PC-9 (cell line): ENCODE measurements at regions of chr11 and their contacts with region 1.

Region 1: DNA sequence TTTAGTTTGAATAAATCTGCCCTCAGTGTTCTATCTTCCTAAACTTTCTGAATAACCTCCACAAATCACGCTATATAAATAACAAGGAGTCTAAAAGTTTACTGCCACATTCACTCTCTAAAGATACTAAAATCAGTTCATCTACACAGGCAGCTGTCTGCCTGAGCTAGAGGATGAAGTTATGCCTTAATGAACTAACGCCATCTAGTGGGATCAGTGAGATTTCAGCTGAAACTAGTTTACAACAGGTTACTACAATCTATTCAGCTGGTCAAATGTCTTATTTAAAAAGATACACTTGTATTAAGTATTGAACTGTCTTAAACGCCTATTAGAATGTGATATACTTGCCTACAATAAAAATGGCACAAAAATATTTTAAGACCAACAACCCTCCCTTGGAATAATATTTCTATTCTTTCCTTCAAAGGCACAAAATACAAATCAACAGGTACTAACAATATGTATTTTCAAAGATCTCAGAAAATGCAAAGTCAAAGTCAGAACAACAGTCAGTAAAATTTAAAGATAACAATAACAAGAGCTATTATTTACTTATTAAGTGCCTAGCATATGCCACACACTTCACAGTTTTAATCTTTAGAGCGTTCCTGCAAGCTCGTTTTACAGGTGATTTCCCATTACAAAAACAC is 84.1 kb downstream of the LARGE2 start:
- DNase-seq: peak; percentile 10 to 67
- H3K4me3 ChIP-seq: no peak overlapping the region
- H3K27ac ChIP-seq: no peak overlapping the region
- H3K4me1 ChIP-seq: no peaks in the 10 kb centered on the region
- H3K27me3 ChIP-seq: no peaks in the 10 kb centered on the region
- CTCF ChIP-seq: peak; percentile 90

Region 2: GRCh38 chr11:45771566-45772448 is 234.7 kb before region 1 on chr11:
- CTCF ChIA-PET with region 1: interaction called, 3 read pairs
- POLR2A ChIA-PET with region 1: no interaction called
- intact Hi-C with region 1: loop called (anchors 1 kb)
- DNase-seq: peak; percentile 59 to 83
- H3K4me3 ChIP-seq: peak overlapping the region; percentile 57
- H3K27ac ChIP-seq: no peak overlapping the region
- H3K4me1 ChIP-seq: no peaks in the 10 kb centered on the region
- H3K27me3 ChIP-seq: peaks cover 78% of the 10 kb centered on the region
- CTCF ChIP-seq: peak; percentile 89

Region 3: GRCh38 chr11:45872513-45873356 is 133.8 kb before region 1 on chr11:
- CTCF ChIA-PET with region 1: interaction called, 18 read pairs
- POLR2A ChIA-PET with region 1: no interaction called
- intact Hi-C with region 1: loop called (anchors 1 kb)
- DNase-seq: peak; percentile 56 to 69
- H3K4me3 ChIP-seq: no peak overlapping the region
- H3K27ac ChIP-seq: no peak overlapping the region
- H3K4me1 ChIP-seq: no peaks in the 10 kb centered on the region
- H3K27me3 ChIP-seq: no peaks in the 10 kb centered on the region
- CTCF ChIP-seq: peak; percentile 88

Region 4: DNA sequence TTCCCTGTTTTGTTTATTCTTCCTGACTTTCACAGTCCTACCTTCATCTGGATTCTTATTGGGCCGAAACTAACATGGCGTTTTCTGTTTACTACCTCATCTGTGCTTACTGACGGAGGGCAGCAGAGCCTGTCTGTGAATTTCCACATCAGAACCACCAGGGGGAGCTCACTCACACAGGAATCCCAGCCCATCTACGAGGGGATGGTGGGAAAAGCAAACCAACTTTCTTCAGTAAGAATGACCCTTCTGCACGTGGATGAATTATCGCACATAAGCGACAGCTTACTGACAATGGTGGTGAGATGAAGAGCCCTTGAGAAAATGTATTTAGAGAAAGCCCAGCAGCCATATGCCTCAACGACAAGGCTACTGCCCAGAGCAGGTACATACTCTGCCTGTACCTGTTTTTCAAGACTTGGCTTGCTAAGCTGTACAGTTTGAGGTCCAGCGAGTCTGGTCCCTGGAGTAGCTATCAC is 41.6 kb before region 1 on chr11:
- CTCF ChIA-PET with region 1: interaction called, 16 read pairs
- POLR2A ChIA-PET with region 1: no interaction called
- intact Hi-C with region 1: loop called (anchors 2 kb)
- DNase-seq: peak; percentile 54 to 62
- H3K4me3 ChIP-seq: no peak overlapping the region
- H3K27ac ChIP-seq: no peak overlapping the region
- H3K4me1 ChIP-seq: no peaks in the 10 kb centered on the region
- H3K27me3 ChIP-seq: no peaks in the 10 kb centered on the region
- CTCF ChIP-seq: peak; percentile 96

Region 5: GRCh38 chr11:46121724-46122477 is 115.4 kb after region 1 on chr11:
- CTCF ChIA-PET with region 1: no interaction called
- POLR2A ChIA-PET with region 1: no interaction called
- intact Hi-C with region 1: loop called (anchors 5 kb)
- DNase-seq: peak; percentile 74 to 81
- H3K4me3 ChIP-seq: peak overlapping the region; percentile 64
- H3K27ac ChIP-seq: peak overlapping the region; percentile 24
- H3K4me1 ChIP-seq: peaks cover 41% of the 10 kb centered on the region
- H3K27me3 ChIP-seq: no peaks in the 10 kb centered on the region
- CTCF ChIP-seq: no peak

Region 6: GRCh38 chr11:46537537-46538295 is 531.2 kb after region 1 on chr11:
- CTCF ChIA-PET with region 1: no interaction called
- POLR2A ChIA-PET with region 1: no interaction called
- intact Hi-C with region 1: loop called (anchors 2 kb)
- DNase-seq: peak; percentile 66 to 76
- H3K4me3 ChIP-seq: no peak overlapping the region
- H3K27ac ChIP-seq: 0 out of 2 replicates have a peak overlapping the region, but pooled peaks have one; percentile 5
- H3K4me1 ChIP-seq: peaks cover 8% of the 10 kb centered on the region; the same call in 1 of the 2 replicates
- H3K27me3 ChIP-seq: no peaks in the 10 kb centered on the region
- CTCF ChIP-seq: peak; percentile 97